Activated CD4-positive, alpha-beta memory T cell treated with anti-CD3 and anti-CD28 coated beads, Interleukin-2, amount 10 ng/mL, durations not matched to agents 7 days and 5 days (primary cell): ENCODE measurements at regions of chr2 and their contacts with region 1.

Region 1: DNA sequence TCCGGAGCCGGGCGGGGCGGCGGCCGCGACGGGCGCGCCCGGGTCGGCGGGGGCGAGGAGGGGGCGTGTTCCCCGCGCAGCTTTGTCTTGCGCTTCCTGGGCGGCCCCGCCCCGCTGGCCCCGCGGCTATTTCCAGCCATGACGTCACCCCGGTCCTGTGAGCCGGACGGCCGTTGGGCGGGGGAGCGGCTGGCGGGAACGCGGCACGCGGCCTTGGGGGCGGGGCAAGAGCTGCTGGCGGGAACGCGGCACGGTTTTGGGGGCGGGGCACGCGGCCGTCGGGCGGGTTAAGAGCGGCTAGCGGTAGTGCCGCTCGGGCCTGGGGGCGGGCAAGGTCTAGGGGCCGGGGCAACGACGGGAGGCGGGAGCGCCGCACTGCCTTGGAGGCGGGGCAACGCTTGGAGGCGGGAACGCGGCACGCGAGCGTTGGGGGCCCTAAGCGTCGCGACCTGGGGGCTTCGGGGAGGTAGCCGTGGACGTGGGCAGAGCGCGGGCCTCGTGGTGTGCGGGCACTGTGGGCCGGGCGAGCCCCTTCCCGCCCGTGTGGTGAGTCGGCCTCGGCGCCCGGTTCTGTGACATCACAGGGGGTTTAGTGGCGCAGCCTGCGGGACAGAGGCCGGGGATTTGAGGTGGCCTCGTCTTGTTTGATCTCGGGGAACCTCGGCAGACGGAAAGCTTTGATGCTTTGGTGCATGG is 704 bp downstream of the KLF11 start:
- DNase-seq: peak; percentile 95
- H3K4me3 Mint-ChIP-seq: peak overlapping the region; percentile 80
- H3K27ac Mint-ChIP-seq: peak overlapping the region; percentile 81
- H3K4me1 Mint-ChIP-seq: peaks cover 44% of the 10 kb centered on the region
- H3K27me3 Mint-ChIP-seq: peaks cover 26% of the 10 kb centered on the region

Region 2: GRCh38 chr2:9914384-9915065 is 129.5 kb before region 1 on chr2:
- CTCF ChIA-PET with region 1: no interaction called
- POLR2A ChIA-PET with region 1: no interaction called
- DNase-seq: peak; percentile 67
- H3K4me3 Mint-ChIP-seq: no peak overlapping the region
- H3K27ac Mint-ChIP-seq: no peak overlapping the region
- H3K4me1 Mint-ChIP-seq: peaks cover 12% of the 10 kb centered on the region
- H3K27me3 Mint-ChIP-seq: no peaks in the 10 kb centered on the region

Region 3: DNA sequence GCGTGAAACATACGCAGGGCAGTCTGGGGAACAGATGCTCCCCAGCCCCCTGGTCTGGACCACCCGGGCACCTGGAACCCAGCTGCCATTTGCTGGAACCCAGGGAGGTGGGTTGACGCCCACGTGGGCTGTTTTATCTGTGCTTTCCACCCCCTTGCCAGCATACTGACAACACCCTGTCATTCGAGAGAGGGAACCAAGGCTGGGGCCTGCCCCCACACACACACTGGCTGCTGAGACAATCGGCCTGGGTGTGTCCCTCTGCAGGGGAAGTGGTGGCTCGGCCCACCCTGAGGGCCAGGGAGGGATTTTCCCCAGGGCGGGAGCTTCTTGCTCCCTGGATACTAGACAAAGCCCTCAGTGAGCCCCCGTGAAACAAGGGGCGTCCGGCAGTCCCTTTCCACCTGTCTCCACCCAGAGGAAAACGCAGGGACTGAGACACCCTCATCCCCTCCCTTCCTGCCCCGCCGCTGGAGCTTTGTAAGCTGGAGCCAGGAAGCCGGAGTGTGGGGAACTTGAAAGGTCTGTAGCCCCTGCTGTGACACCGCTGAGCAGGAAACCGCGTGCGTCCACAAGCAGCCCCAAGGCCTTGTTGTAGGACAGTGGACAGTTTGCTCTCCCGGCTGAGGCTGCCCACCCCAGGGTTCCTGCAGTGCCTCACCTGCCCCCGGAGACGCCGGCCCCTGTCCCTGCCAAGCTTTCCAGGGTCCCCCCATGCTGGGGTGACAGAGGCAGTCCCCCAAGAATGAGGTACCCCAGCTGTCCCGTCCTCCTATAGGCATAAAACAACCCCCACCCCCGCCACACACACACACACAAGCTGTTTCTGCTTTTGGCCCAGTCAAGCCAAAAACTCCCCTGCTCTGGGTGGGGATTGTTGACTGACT is 14.8 kb before region 1 on chr2:
- CTCF ChIA-PET with region 1: interaction called, 11 read pairs
- POLR2A ChIA-PET with region 1: interaction called, 88 read pairs
- DNase-seq: peak; percentile 77
- H3K4me3 Mint-ChIP-seq: peak overlapping the region; percentile 65
- H3K27ac Mint-ChIP-seq: peak overlapping the region; percentile 79
- H3K4me1 Mint-ChIP-seq: peaks cover 38% of the 10 kb centered on the region
- H3K27me3 Mint-ChIP-seq: no peaks in the 10 kb centered on the region